PC-9 (cell line): ENCODE measurements at regions of chrX and their contacts with region 1.

Region 1: DNA sequence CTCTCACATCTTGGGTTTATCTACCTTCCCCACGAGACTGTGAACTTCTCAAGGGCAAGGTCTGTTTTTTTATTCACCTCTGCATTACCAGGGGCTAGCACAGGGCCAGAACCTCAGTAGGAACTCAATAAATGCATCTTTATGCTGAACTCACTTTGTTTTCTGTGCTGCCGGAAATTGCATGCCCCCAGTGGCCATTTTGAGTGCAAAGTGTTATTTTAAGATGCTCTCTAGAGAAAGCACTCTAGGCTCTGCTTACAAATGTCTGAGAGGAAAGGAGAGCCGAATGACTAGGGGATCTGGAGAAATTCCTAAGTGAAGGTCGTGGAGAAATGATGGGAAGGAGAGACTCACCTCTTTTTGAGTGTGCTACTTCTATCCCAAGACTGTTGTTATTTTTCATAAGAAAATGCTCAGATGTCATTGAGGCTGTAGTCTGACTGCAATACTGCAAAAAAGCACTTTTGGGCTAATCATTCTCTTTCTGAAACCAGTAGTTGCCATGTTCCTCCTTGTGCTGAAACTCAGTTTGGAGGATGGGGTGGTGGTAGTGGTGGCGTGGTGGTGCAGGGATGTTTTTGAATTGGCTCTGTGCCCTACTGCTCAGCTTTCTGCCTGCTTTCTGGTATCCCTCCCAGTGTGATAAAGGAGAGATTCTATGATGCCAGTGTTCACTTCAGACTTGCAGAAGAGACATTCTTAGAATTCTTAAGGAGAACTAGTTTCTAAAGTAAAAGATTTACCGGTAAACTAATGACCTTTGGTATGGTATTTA is 41.3 kb downstream of the DOCK11 start:
- DNase-seq: peak; percentile 8 to 51
- H3K4me3 ChIP-seq: no peak overlapping the region
- H3K27ac ChIP-seq: no peak overlapping the region
- H3K4me1 ChIP-seq: peaks cover 11% of the 10 kb centered on the region
- H3K27me3 ChIP-seq: no peaks in the 10 kb centered on the region
- CTCF ChIP-seq: peak; percentile 48; the same call in 1 of the 2 replicates

Region 2: DNA sequence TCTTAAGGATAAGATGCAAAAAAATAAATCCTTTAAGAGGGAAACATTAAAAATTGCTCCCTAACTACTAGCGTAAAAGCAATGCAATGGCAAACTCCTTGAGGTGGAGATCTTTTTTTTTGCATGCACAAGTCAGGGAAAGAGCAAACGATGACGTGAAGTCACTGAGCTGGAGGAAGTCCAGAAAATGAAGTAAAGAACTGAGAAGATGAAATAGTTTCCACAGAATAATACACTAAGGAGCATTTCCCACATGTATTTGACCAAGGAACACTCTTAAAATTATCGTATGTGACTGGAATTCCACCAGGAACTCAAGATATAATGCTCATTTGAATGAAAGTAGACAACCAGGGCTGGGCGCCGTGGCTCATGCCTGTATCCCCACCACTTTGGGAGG is 62.3 kb before region 1 on chrX:
- CTCF ChIA-PET with region 1: interaction called, 3 read pairs
- POLR2A ChIA-PET with region 1: interaction called, 10 read pairs
- intact Hi-C with region 1: no loop called
- DNase-seq: no peak
- H3K4me3 ChIP-seq: no peak overlapping the region
- H3K27ac ChIP-seq: no peak overlapping the region
- H3K4me1 ChIP-seq: peaks cover 15% of the 10 kb centered on the region; the same call in 1 of the 2 replicates
- H3K27me3 ChIP-seq: no peaks in the 10 kb centered on the region
- CTCF ChIP-seq: no peak

Region 3: GRCh38 chrX:118745570-118745969 is 208.7 kb after region 1 on chrX:
- CTCF ChIA-PET with region 1: no interaction called
- POLR2A ChIA-PET with region 1: no interaction called
- intact Hi-C with region 1: no loop called
- DNase-seq: no peak
- H3K4me3 ChIP-seq: no peak overlapping the region
- H3K27ac ChIP-seq: no peak overlapping the region
- H3K4me1 ChIP-seq: peaks cover 12% of the 10 kb centered on the region
- H3K27me3 ChIP-seq: no peaks in the 10 kb centered on the region
- CTCF ChIP-seq: no peak

Region 4: GRCh38 chrX:119093991-119094737 is 557.3 kb after region 1 on chrX:
- CTCF ChIA-PET with region 1: no interaction called
- POLR2A ChIA-PET with region 1: no interaction called
- intact Hi-C with region 1: no loop called
- DNase-seq: no peak
- H3K4me3 ChIP-seq: no peak overlapping the region
- H3K27ac ChIP-seq: no peak overlapping the region
- H3K4me1 ChIP-seq: no peaks in the 10 kb centered on the region
- H3K27me3 ChIP-seq: peaks cover 14% of the 10 kb centered on the region; the same call in 1 of the 2 replicates
- CTCF ChIP-seq: no peak